ENCODE measurements at regions of chr2 and their contacts with region 1.

Region 1: DNA sequence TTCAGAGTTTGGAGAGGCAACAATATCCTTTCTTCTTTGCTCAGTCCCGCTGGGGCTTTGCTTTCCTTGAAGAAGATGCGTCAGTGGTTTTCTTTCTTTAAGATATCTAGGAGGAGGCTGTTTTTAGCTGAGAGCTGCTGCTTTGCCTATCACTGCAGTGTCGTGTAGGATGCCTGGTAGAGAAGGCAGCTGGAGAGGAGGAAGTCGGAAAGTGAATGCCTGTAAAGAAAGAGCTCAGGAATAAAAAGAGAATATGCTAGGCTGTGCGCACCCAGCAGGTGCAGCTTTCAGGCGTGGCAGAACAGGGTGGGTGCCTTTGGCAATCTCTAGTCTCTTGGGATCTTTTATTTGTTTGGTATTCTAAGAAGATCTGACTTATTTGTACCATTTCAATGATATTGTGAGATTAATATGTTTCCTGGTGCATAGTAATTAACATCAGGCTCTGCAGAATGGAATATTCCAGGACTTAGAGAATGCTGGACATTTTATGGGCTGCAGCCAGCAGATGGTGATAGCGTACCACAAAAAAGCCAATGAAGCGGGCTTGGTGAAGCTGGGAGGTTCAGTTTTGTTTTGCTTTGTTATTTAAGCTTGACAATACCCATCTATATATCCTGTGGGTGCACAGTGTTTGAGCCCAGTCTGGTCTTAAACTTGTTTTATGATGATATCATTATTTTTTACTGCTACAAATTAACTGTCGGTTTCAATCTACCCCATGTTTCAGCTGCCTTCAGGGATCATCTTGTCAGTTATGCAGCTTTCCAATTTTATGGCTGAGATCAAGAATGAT is 34.9 kb downstream of the CAVIN2 start:
- DNase-seq: no peak
- H3K4me3 ChIP-seq: no peak overlapping the region
- CTCF ChIP-seq: peak; percentile 76

Region 2: GRCh38 chr2:191555092-191555742 is 256.8 kb before region 1 on chr2:
- CTCF ChIA-PET with region 1: interaction called, 35 read pairs
- POLR2A ChIA-PET with region 1: no interaction called
- DNase-seq: no peak
- H3K4me3 ChIP-seq: no peak overlapping the region
- CTCF ChIP-seq: peak; percentile 61

Region 3: GRCh38 chr2:191625016-191625415 is 187.0 kb before region 1 on chr2:
- CTCF ChIA-PET with region 1: no interaction called
- POLR2A ChIA-PET with region 1: no interaction called
- DNase-seq: no peak
- H3K4me3 ChIP-seq: no peak overlapping the region
- CTCF ChIP-seq: no peak

Region 4: GRCh38 chr2:191824398-191824797 is 12.4 kb after region 1 on chr2:
- CTCF ChIA-PET with region 1: interaction called, 36 read pairs
- POLR2A ChIA-PET with region 1: no interaction called
- DNase-seq: no peak
- H3K4me3 ChIP-seq: no peak overlapping the region
- CTCF ChIP-seq: no peak

Region 5: GRCh38 chr2:192082121-192082520 is 270.1 kb after region 1 on chr2:
- CTCF ChIA-PET with region 1: no interaction called
- POLR2A ChIA-PET with region 1: no interaction called
- DNase-seq: no peak
- H3K4me3 ChIP-seq: no peak overlapping the region
- CTCF ChIP-seq: no peak

Region 6: GRCh38 chr2:192148620-192149321 is 336.8 kb after region 1 on chr2:
- CTCF ChIA-PET with region 1: interaction called, 601 read pairs
- POLR2A ChIA-PET with region 1: interaction called, 3 read pairs
- DNase-seq: no peak
- H3K4me3 ChIP-seq: no peak overlapping the region
- CTCF ChIP-seq: peak; percentile 7

Region 7: GRCh38 chr2:192286093-192286701 is 474.2 kb after region 1 on chr2:
- CTCF ChIA-PET with region 1: interaction called, 40 read pairs
- POLR2A ChIA-PET with region 1: no interaction called
- DNase-seq: peak; percentile 5
- H3K4me3 ChIP-seq: no peak overlapping the region
- CTCF ChIP-seq: peak; percentile 51